ENCODE measurements at regions of chr4 and their contacts with region 1.

Region 1: DNA sequence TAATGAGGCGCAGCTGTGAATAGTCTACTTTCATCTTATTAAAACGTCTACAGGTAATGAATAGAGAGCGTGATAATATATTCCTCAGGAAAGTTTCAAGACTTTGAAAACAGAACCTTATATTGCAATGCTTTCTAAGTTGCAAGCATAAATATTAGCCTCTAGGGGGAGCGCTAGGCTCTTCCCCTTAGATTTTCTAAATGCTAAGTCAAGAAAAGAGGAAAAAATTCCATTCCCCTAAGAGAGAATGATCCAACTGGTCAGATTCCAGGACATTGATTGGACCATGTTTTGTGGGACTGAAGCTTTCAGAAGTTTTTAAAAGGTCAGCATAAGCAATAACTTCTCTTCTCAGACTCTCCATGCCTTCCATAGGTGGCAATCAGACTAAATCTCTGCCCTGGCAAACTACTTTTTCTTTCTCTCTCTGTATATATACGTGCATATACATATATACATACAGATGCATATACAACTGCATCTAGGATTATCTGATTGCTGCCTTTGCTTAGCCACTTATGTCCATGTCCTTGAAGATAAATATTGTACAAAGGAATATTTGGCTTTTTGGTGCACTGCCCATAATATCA is 492.9 kb downstream of the INPP4B start:
- DNase-seq: peak in 5 of 7 donors; percentile 20 to 47 (median 33)
- H3K4me3 ChIP-seq: no peak overlapping the region
- H3K27ac ChIP-seq: peak overlapping the region in 1 of 5 donors; percentile 5
- H3K4me1 ChIP-seq: peaks cover 18 to 44% of the 10 kb centered on the region in 2 donors
- H3K27me3 ChIP-seq: no peaks in the 10 kb centered on the region
- CTCF ChIP-seq: peak; percentile 71 to 94 (median 86)
- POLR2A ChIP-seq: no peak

Region 2: DNA sequence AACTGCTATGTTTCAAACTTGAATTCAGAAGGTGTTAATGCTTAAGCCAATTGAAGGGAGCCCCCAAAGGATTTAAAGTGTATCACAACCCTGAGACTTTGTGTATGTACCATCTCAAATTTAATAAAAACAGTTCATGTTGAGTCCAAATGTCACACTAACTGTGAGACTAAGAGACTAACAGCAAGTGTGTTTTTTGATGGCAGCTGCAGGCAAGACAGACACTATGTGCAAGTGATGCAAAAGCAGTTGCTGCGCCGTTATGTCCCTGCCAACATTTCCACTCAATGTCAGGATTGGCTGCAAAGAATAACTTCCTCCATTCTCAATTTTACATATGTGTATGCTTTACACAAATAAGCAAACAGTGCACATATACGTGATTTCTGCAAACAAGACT is 122.3 kb before region 1 on chr4:
- intact Hi-C with region 1: no loop called
- DNase-seq: no peak
- H3K4me3 ChIP-seq: no peak overlapping the region
- H3K27ac ChIP-seq: no peak overlapping the region
- H3K4me1 ChIP-seq: no peaks in the 10 kb centered on the region
- H3K27me3 ChIP-seq: no peaks in the 10 kb centered on the region
- CTCF ChIP-seq: no peak
- POLR2A ChIP-seq: no peak

Region 3: GRCh38 chr4:142846729-142847596 is 493.7 kb after region 1 on chr4:
- intact Hi-C with region 1: loop called in 1 of 2 experiments (anchors 10 kb)
- DNase-seq: peak in 5 of 7 donors; percentile 19 to 67 (median 31)
- H3K4me3 ChIP-seq: peak overlapping the region in 3 of 4 donors; percentile 5 to 51 (median 45)
- H3K27ac ChIP-seq: no peak overlapping the region
- H3K4me1 ChIP-seq: peaks cover 11 to 14% of the 10 kb centered on the region in 2 donors
- H3K27me3 ChIP-seq: no peaks in the 10 kb centered on the region
- CTCF ChIP-seq: peak in 4 of 6 experiments; percentile 7 to 38 (median 30)
- POLR2A ChIP-seq: no peak

Measured in adrenal gland (tissue), 19 donors.